Left cardiac atrium (tissue), 4 donors: ENCODE measurements at regions of chr5 and their contacts with region 1.

Region 1: GRCh38 chr5:36414869-36415282 is 113.2 kb upstream of the RANBP3L start:
- DNase-seq: no peak
- ATAC-seq: peak; percentile 49 to 61

Region 2: DNA sequence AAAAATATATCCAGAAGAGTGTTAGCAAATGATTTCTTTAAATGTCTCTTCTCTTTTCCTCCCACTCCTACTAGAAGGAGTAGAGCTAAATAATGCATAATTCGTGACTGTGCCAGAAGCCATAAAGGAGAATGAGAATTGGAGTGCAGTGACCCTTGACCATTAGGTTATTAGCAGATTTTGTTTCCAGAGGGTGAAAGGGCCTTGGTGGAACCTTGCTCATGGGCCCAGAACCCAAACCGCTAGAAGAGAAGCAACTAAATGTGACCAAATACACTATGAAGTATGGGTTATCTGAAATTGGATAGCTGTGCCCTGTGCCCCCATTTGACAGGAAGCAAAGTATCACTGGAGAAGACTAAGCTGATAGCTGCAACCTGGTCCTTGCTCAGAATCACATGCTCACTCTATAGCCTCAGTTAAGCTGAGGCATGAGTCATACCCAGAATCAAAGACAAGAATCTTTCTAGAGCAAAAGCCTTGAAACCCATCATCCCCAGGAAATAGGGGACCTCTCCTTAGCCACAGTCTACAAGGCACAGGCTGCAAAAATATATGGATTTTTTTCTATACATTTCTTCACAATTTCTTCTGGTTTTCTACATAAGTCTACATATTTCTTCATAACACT is 512.7 kb before region 1 on chr5:
- intact Hi-C with region 1: no loop called
- DNase-seq: no peak
- ATAC-seq: no peak

Region 3: DNA sequence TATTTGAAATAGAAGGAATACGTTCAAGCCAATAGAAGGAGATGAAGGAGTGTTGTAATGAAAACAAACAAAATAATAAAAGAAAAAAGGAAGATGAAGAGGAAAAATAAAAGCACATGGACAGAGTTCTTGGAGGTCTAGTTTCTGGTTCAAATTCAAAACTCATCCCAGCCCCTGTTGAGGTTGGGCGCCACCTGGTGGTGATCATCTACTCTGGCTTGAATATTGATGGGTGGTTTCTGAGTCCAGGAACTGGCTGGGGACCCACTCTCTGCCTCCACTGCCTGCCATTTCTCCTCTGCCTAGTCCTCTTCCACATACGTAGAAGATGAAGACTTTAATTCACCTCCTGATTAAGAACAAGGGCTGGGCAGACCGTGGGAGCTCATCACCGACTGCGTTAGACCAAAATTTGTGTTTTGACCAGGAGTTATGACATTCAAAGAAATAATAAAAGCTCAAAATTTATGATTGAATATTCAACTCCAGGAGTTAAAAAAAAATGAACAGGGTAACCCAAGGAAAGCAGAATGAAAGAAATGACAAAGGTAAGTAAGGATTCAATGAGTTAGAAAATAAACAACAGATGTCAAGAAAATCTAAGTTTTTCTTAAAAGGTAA is 92.6 kb after region 1 on chr5:
- intact Hi-C with region 1: loop called (anchors 5 to 10 kb)
- DNase-seq: peak; percentile 83
- ATAC-seq: peak; percentile 72 to 73

Region 4: GRCh38 chr5:36606428-36607113 is 191.7 kb after region 1 on chr5 and contains the start of gene SLC1A3:
- intact Hi-C with region 1: loop called in 1 of 2 experiments (anchors 10 kb)
- DNase-seq: peak; percentile 53
- ATAC-seq: peak; percentile 88 to 96
- total RNA-seq, gene SLC1A3: 44.9 to 66.6 TPM

Region 5: DNA sequence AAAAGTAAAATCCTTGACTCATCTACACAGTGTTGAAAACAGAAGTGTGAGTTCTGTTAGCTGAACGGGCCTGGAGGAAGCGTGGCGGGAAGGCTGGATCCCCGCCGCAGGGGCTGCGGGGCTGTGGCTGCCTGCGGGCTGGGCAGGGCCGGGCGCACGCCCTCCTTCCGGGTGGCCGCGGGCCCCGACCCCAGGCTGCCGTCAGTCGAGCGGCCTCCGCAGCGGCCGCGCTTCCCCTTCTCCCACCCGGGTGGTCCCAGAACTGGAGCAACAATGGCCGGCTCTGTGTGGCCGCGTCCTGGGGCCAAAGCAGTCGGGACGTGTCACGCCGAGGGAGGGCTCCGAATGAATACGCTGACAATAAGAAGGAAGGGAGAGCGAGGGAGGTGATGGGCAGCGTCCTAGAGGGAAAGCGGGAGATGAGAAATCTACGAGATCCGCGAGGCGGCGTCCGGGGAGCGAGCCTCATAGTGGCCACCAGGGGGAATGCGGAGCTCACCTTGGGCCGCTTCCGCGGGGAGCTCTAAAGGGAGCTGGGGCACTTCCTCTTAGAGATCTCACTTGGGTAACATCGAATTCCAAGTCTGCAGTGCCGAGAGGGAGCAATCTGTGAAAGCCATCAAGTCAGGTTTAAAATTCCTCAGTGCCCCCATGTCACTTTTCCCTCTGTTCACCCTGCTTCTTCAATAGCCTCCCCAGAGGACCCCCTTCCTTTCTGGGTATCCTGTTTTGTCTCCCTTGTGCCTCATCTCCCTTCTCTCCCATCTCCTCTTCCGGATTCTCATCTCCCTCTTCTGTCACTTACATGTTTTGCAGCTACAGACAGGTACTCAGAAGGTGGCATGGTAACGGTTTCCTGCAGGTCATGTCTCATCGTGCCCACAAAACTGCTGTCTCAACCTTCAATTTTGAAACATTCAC is 275.4 kb after region 1 on chr5:
- intact Hi-C with region 1: loop called (anchors 1 to 5 kb)
- DNase-seq: peak; percentile 82
- ATAC-seq: peak; percentile 79 to 85